Panc1 (cell line): ENCODE measurements at regions of chr12 and their contacts with region 1.

Region 1: DNA sequence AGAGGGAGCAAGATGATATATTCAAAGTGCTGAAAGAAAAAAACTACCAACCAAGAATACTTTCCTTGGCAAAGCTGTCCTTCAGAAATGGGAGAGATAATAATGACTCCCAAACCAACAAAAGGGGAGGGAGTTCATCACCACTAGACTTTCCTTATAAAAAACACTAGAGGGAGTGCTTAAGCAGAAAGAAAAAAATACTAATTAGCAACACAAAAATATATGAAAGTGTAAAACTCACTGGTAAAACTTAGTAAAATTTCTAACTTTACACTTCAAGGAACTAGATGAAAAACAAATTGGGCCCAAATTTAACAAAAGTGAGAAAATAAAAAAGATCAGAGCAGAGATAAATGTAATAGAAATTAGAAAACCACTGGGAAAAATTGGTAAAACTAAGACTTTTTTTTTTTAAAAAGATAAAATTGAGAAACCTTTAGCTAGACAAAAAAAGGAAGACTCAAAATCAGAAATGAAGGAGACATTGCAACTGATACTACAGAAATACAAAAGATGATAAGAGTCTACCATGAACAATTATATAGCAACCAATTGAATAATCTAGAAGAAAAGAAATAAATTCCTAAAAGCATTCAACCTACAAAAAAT is 60.4 kb upstream of the FAR2 start:
- DNase-seq: no peak
- ATAC-seq: no peak
- H3K4me3 ChIP-seq: no peak overlapping the region
- H3K27ac ChIP-seq: no peak overlapping the region
- H3K4me1 ChIP-seq: no peaks in the 10 kb centered on the region
- H3K27me3 ChIP-seq: no peaks in the 10 kb centered on the region
- CTCF ChIP-seq: peak; percentile 60; the same call in 1 of the 2 replicates

Region 2: DNA sequence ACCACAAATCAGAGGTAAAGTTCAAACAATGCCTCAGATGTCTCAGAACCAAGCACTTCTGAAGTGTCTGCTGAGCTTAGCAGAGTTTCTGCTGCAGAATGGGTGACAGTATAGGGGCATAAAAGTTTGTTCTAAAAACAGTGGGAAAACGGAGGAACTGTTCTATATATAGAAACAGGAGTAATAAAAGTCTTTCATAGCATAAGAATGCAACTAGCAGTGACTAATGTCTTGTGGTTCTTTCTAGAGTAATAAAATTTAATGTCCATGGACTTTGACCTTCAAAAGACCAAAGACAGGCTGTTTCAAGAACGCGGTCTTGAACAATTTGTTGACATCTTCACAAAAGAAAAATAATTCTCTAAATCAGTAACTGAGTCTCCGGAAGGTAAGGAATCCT is 47.1 kb before region 1 on chr12:
- CTCF ChIA-PET with region 1: no interaction called
- POLR2A ChIA-PET with region 1: no interaction called
- in situ Hi-C with region 1: no loop called
- intact Hi-C with region 1: no loop called
- DNase-seq: peak; percentile 65
- ATAC-seq: no peak
- H3K4me3 ChIP-seq: no peak overlapping the region
- H3K27ac ChIP-seq: no peak overlapping the region
- H3K4me1 ChIP-seq: no peaks in the 10 kb centered on the region
- H3K27me3 ChIP-seq: no peaks in the 10 kb centered on the region
- CTCF ChIP-seq: no peak

Region 3: GRCh38 chr12:29155079-29155478 is 66.4 kb after region 1 on chr12:
- CTCF ChIA-PET with region 1: no interaction called
- POLR2A ChIA-PET with region 1: no interaction called
- in situ Hi-C with region 1: no loop called
- intact Hi-C with region 1: no loop called
- DNase-seq: no peak
- ATAC-seq: no peak
- H3K4me3 ChIP-seq: no peak overlapping the region
- H3K27ac ChIP-seq: no peak overlapping the region
- H3K4me1 ChIP-seq: no peaks in the 10 kb centered on the region
- H3K27me3 ChIP-seq: peaks cover 2% of the 10 kb centered on the region; the same call in 1 of the 2 replicates
- CTCF ChIP-seq: no peak

Region 4: GRCh38 chr12:29317556-29318363 is 229.0 kb after region 1 on chr12:
- CTCF ChIA-PET with region 1: no interaction called
- POLR2A ChIA-PET with region 1: no interaction called
- in situ Hi-C with region 1: no loop called
- intact Hi-C with region 1: loop called (anchors 5 kb)
- DNase-seq: peak; percentile 69
- ATAC-seq: peak; percentile 98
- H3K4me3 ChIP-seq: no peak overlapping the region
- H3K27ac ChIP-seq: no peak overlapping the region
- H3K4me1 ChIP-seq: no peaks in the 10 kb centered on the region
- H3K27me3 ChIP-seq: no peaks in the 10 kb centered on the region
- CTCF ChIP-seq: peak; percentile 91